ENCODE measurements at regions of chr18 and their contacts with region 1.

Region 1: GRCh38 chr18:35688757-35689156 is 107.2 kb downstream of the GALNT1 start:
- DNase-seq: no peak
- H3K4me3 ChIP-seq: no peak overlapping the region
- H3K4me3 Mint-ChIP-seq: no peak overlapping the region
- H3K27ac ChIP-seq: no peak overlapping the region
- H3K27ac Mint-ChIP-seq: no peak overlapping the region
- H3K4me1 ChIP-seq: no peaks in the 10 kb centered on the region
- H3K4me1 Mint-ChIP-seq: no peaks in the 10 kb centered on the region
- H3K27me3 ChIP-seq: no peaks in the 10 kb centered on the region
- H3K27me3 Mint-ChIP-seq: no peaks in the 10 kb centered on the region

Region 2: DNA sequence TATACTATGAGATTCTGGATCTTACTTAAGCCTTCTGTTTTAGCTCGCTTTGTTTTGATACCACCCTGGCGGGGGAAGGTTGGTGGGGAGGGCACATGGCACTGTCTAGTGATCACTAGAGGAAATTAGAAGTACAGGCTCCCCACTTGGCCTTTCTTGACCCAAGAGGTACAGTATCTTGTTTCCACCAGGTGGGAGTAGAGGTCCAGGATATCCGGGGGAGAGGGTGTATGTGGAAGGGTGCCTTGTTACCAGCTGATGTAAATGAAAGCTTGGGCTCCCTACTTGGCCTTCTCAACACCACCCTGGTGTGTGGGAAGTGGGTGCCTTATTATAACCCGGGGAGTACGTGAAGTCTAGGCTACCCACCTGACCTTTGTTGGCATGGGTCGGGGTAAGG is 99.8 kb before region 1 on chr18:
- CTCF ChIA-PET with region 1: no interaction called
- POLR2A ChIA-PET with region 1: no interaction called
- intact Hi-C with region 1: loop called (anchors 5 kb)
- DNase-seq: peak in 4 of 5 donors; percentile 6 to 25 (median 23)
- H3K4me3 ChIP-seq: no peak overlapping the region
- H3K4me3 Mint-ChIP-seq: no peak overlapping the region
- H3K27ac ChIP-seq: no peak overlapping the region
- H3K27ac Mint-ChIP-seq: no peak overlapping the region
- H3K4me1 ChIP-seq: no peaks in the 10 kb centered on the region
- H3K4me1 Mint-ChIP-seq: peaks cover 8 to 25% (median 17%) of the 10 kb centered on the region in 4 donors
- H3K27me3 ChIP-seq: no peaks in the 10 kb centered on the region
- H3K27me3 Mint-ChIP-seq: no peaks in the 10 kb centered on the region

Region 3: GRCh38 chr18:35672897-35673296 is 15.9 kb before region 1 on chr18:
- CTCF ChIA-PET with region 1: no interaction called
- POLR2A ChIA-PET with region 1: no interaction called
- intact Hi-C with region 1: no loop called
- DNase-seq: no peak
- H3K4me3 ChIP-seq: no peak overlapping the region
- H3K4me3 Mint-ChIP-seq: no peak overlapping the region
- H3K27ac ChIP-seq: no peak overlapping the region
- H3K27ac Mint-ChIP-seq: peak overlapping the region in 1 of 7 donors; percentile 50
- H3K4me1 ChIP-seq: no peaks in the 10 kb centered on the region
- H3K4me1 Mint-ChIP-seq: no peaks in the 10 kb centered on the region
- H3K27me3 ChIP-seq: no peaks in the 10 kb centered on the region
- H3K27me3 Mint-ChIP-seq: no peaks in the 10 kb centered on the region